SK-N-SH (cell line): ENCODE measurements at regions of chr19 and their contacts with region 1.

Region 1: DNA sequence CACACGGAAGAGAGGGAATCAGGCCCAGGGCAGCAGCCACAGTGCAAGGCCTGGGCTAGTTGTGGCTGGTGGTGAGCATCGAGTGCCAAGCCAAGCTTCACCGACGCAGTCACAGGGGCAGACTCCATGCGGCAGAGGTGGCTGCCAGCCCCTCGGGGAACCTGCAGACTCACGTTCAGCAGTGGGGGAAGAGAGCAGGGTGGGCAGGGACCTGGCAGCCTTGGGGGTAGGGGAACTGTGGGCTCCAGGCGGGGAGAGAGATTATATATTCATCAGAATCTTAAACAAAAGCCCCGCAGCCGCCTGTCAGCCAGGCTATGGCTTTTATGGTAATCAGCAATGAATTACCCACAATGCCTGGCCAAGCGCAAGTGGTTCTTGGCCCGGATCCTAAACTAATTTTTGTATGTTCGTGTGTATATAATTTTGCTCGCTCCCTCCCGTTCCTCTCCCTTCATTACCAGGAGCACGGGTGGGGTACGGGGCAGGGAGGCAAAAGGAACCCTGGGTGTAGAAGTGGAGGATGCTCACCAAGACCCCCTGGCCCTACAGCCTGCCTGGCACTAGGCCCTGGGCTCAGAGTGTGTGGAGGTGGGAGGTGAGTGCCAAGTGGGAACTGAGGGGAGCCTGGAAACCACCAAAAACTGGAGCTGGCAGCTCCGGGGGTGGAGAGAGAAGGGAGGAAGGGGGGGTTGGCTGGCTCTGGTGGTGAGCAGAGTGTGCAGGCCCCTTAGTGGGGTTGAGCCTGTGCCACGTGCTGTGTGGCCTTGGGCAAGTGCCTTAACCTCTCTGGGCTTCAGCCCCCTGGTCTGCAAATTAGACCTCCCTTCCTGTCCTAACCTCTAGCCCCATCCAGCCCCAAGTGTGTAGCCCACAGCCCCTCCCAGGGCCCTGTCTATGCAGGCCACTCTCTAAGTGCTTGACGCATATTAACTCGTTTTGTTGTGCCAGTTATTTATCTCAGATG is 31.9 kb downstream of the PTPRS start:
- DNase-seq: peak; percentile 89
- H3K4me3 ChIP-seq: peak overlapping the region in 1 of 2 experiments; percentile 27; a peak in 1 of 4 replicates
- H3K27ac ChIP-seq: peak overlapping the region; percentile 64 to 95; a peak in 3 of 4 replicates
- H3K4me1 ChIP-seq: peaks cover 0 to 20% of the 10 kb centered on the region in 2 experiments; a peak in 1 of 4 replicates
- H3K27me3 ChIP-seq: no peaks in the 10 kb centered on the region
- CTCF ChIP-seq: no peak
- EP300 ChIP-seq: no peak; a peak in 1 of 4 replicates
- RAD21 ChIP-seq: peak; percentile 11; the same call in 1 of the 2 replicates

Region 2: GRCh38 chr19:5340637-5341447 is 32.1 kb after region 1 on chr19 and contains the start of gene PTPRS:
- CTCF ChIA-PET with region 1: no interaction called
- POLR2A ChIA-PET with region 1: interaction called, 15 read pairs
- DNase-seq: peak; percentile 99
- H3K4me3 ChIP-seq: peak within 1 kb of the TSS; percentile 83 to 88
- H3K27ac ChIP-seq: peak within 1 kb of the TSS; percentile 70 to 89
- H3K4me1 ChIP-seq: peaks cover 5 to 8% of the 10 kb centered on the region in 2 experiments; a peak in 2 of 4 replicates
- H3K27me3 ChIP-seq: no peaks in the 10 kb centered on the region
- CTCF ChIP-seq: no peak
- EP300 ChIP-seq: no peak
- RAD21 ChIP-seq: no peak
- polyA plus RNA-seq, gene PTPRS: 57.1 and 91.0 TPM in 2 replicates